AG04449 (cell line): ENCODE measurements at regions of chr13 and their contacts with region 1.

Region 1: DNA sequence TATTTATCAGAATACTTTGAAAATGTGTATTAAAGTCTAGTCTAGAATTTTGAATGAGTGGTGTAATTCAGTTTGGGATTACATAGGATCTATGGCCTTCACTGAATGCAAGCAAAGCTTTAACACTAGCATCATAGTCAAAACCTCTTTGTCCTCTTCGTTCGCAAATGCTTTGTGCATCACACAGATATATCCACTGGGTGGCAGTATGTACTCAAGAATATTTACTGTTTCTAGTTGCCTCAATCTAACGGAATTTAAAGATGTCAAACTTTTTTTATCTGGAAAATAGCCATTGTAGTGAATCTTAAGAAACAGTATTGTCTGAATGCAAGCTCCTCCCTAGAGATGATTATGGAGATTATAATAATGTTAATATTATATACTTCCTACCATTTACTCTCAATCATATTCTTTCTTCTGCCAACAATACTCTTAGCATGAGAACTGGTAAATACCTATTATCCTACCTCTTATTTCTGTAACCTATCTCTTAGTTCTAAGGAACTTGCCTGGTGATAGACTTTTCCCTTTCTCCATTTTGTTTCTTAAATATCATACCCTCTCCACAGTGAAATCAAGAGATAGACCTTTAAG is 25.8 kb downstream of the LACC1 start:
- DNase-seq: no peak
- H3K4me3 ChIP-seq: no peak overlapping the region
- CTCF ChIP-seq: peak; percentile 43

Region 2: GRCh38 chr13:43786773-43787517 is 118.6 kb before region 1 on chr13 and contains the start of gene ENOX1:
- CTCF ChIA-PET with region 1: no interaction called
- POLR2A ChIA-PET with region 1: no interaction called
- DNase-seq: no peak
- H3K4me3 ChIP-seq: peak within 1 kb of the TSS; percentile 72
- CTCF ChIP-seq: peak; percentile 43

Region 3: DNA sequence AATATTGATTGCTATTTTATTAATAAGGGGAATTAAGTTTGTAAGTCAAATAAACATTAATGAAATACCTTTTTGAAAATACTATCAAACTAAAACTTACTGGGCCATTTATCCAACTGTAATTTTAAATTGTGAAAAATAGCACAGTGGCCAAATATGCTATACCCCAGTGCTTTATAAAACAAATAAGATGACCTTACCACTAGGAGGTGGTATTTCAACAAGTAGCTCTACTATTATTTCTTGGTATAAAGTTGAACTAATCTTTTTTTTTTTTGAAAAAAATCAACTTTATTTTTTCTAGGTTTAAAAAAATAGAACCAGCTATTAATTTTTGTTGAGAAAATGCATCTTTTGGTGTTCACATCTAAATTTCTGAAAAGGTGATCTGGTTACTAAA is 11.1 kb before region 1 on chr13:
- CTCF ChIA-PET with region 1: interaction called, 27 read pairs
- POLR2A ChIA-PET with region 1: no interaction called
- DNase-seq: no peak
- H3K4me3 ChIP-seq: no peak overlapping the region
- CTCF ChIP-seq: no peak

Region 4: GRCh38 chr13:44050450-44051063 is 145.0 kb after region 1 on chr13:
- CTCF ChIA-PET with region 1: interaction called, 26 read pairs
- POLR2A ChIA-PET with region 1: no interaction called
- DNase-seq: no peak
- H3K4me3 ChIP-seq: no peak overlapping the region
- CTCF ChIP-seq: peak; percentile 50

Region 5: GRCh38 chr13:44464471-44464870 is 558.9 kb after region 1 on chr13:
- CTCF ChIA-PET with region 1: interaction called, 52 read pairs
- POLR2A ChIA-PET with region 1: no interaction called
- DNase-seq: no peak
- H3K4me3 ChIP-seq: no peak overlapping the region
- CTCF ChIP-seq: no peak

Region 6: DNA sequence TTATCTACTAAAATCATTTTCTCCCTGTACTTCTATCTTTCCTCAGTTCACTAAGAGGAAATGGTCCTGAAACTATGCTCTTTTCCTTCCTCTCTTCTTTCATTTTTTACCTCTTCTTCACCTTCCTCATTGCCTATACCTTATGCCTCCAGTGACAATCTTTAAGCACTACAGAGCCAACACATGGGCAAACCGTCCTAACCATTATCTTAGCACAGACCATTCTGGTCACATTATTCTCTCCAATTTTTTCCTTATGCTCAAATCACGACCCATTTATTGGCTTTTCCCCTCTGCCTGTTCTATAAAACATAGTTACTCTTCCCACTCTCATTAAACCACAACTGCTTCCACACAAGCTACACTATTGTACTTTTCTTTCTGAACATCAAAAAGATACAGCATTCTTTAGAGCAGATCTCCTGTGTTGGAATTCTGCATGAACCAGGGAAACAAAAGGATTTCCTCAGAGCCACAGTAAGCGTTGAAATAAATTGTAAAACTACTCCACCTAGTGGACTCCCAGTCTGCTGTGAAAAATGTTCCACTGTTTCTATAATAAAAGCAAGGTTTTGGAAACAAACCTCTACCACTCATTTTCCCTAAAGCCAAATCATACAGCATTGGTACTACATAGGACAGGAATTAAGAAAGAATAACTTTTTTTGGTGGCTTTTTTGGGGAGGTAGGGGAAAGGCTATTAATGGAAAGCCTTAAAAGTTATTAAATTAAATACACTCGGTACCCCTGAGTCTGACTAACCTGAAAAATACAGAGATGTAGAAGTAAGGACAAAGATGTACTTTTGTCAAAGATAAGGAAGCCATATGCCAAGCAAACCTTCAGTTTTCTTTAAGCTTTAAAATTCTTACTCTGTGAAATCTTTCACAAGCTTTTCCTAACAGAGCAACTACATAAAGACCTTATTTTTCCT is 1064.3 kb after region 1 on chr13:
- CTCF ChIA-PET with region 1: interaction called, 17 read pairs
- POLR2A ChIA-PET with region 1: no interaction called
- DNase-seq: no peak
- H3K4me3 ChIP-seq: no peak overlapping the region
- CTCF ChIP-seq: peak; percentile 41